Lower leg skin (tissue), 4 donors: ENCODE measurements at regions of chr12 and their contacts with region 1.

Region 1: GRCh38 chr12:78818487-78818886 is 46.1 kb upstream of the SYT1 start:
- DNase-seq: no peak
- H3K4me3 ChIP-seq: no peak overlapping the region
- CTCF ChIP-seq: no peak
- POLR2A ChIP-seq: no peak

Region 2: GRCh38 chr12:77421152-77421551 is 1397.3 kb before region 1 on chr12:
- intact Hi-C with region 1: no loop called
- DNase-seq: no peak
- H3K4me3 ChIP-seq: no peak overlapping the region
- CTCF ChIP-seq: no peak
- POLR2A ChIP-seq: no peak

Region 3: DNA sequence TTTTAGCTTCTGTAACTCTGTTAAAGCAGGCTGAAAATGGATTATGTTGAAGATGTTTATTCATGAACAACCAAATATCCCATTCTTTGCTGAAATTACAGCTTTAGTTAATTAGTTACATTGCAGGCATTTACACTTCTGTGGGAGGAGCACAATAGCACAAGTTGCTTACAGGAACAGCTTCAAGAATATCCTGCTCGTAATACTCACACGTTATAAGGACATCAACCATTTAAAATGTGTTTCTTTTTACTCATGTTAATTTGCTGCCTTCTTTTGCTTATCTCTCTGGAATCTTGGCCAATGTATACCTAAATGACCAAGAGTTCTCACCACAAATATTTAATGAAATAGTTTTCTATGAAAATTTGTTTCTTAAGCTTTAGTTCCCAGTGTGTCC is 259.1 kb before region 1 on chr12:
- intact Hi-C with region 1: no loop called
- DNase-seq: no peak
- H3K4me3 ChIP-seq: no peak overlapping the region
- CTCF ChIP-seq: no peak
- POLR2A ChIP-seq: no peak

Region 4: GRCh38 chr12:78802593-78802992 is 15.9 kb before region 1 on chr12:
- intact Hi-C with region 1: loop called (anchors 1 kb)
- DNase-seq: no peak
- H3K4me3 ChIP-seq: no peak overlapping the region
- CTCF ChIP-seq: no peak
- POLR2A ChIP-seq: no peak